ENCODE measurements at regions of chr22 and their contacts with region 1.

Region 1: DNA sequence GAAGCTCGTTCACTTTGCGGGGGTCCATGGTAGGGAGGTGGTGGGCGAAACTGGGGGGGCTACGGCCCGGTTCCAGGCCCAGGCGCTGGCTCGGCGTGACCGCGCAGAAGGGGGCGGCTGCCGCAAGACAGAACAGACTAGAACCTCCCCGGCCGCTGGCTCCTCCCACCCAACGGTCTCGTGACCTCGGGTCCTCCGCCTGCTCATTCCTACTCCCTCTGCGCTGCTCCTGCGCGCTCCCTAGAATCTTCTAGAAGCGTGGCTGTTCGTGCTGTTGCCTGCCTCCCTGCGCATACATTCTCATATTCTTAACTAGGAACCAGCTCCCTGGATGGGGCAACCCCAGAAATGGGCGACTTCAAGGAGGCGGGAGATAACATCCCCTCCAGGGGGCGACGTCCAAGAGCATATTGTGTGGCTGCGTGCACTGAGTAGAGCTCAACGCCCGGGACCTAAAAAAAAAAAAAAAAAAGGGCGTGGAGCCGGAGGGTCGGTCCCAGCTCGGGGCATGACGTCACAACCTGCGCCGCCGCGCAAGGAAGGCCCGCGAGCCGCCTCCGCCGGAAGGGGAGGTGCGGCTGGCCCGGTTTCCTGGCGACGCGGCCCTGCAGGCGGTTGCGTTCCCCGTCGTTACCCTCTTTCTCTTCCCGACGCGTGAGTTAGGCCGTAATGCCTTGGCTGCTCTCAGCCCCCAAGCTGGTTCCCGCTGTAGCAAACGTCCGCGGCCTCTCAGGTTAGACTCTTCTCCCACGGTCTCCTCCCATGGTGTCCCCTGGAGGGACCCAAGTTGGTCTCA is at the starts of genes ST13 and XPNPEP3:
- DNase-seq: peak; percentile 88 to 98
- H3K4me3 ChIP-seq: peak within 1 kb of the TSS; percentile 98 to 99 (median 98)
- H3K27ac ChIP-seq: peak within 1 kb of the TSS; percentile 98
- H3K4me1 ChIP-seq: peaks cover 0 to 6% (median 0%) of the 10 kb centered on the region in 4 experiments; a peak in 2 of 7 replicates
- H3K27me3 ChIP-seq: no peaks in the 10 kb centered on the region
- CTCF ChIP-seq: no peak
- EP300 ChIP-seq: peak; percentile 22 to 47; a peak in 2 of 3 replicates
- POLR2A ChIP-seq: peak; percentile 81 to 91
- RAD21 ChIP-seq: no peak
- total RNA-seq, gene ST13: 305 TPM in 2 replicates
- total RNA-seq, gene XPNPEP3: 21.5 and 25.8 TPM in 2 replicates

Region 2: DNA sequence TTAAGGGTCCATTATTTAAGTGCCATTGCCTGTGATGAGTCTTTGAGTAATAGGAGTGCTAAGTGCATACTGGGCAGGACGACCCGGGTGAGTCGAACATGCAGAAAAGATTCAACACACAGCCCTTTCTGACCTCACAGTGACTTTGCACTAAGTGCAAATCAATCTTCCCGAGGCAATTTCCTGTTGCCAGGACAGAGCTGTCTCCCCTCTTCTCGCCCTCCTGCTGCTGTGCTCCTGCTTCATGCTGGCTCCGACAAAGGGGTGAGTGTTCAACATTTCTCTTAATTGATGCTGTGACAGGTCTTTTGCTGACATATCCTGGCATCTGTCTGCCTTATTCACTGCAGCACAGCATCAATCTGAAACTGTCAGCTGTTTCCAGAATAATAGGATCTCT is 135.4 kb before region 1 on chr22:
- CTCF ChIA-PET with region 1: no interaction called
- POLR2A ChIA-PET with region 1: no interaction called
- DNase-seq: no peak
- H3K4me3 ChIP-seq: no peak overlapping the region
- H3K27ac ChIP-seq: no peak overlapping the region
- H3K4me1 ChIP-seq: peaks cover 0 to 10% (median 7%) of the 10 kb centered on the region in 4 experiments; a peak in 5 of 7 replicates
- H3K27me3 ChIP-seq: no peaks in the 10 kb centered on the region
- CTCF ChIP-seq: no peak
- EP300 ChIP-seq: no peak
- POLR2A ChIP-seq: no peak
- RAD21 ChIP-seq: no peak

Region 3: GRCh38 chr22:40766956-40767355 is 89.8 kb before region 1 on chr22:
- CTCF ChIA-PET with region 1: no interaction called
- POLR2A ChIA-PET with region 1: no interaction called
- DNase-seq: no peak
- H3K4me3 ChIP-seq: no peak overlapping the region
- H3K27ac ChIP-seq: no peak overlapping the region
- H3K4me1 ChIP-seq: no peaks in the 10 kb centered on the region
- H3K27me3 ChIP-seq: no peaks in the 10 kb centered on the region
- CTCF ChIP-seq: no peak
- EP300 ChIP-seq: no peak
- POLR2A ChIP-seq: no peak
- RAD21 ChIP-seq: no peak

Region 4: DNA sequence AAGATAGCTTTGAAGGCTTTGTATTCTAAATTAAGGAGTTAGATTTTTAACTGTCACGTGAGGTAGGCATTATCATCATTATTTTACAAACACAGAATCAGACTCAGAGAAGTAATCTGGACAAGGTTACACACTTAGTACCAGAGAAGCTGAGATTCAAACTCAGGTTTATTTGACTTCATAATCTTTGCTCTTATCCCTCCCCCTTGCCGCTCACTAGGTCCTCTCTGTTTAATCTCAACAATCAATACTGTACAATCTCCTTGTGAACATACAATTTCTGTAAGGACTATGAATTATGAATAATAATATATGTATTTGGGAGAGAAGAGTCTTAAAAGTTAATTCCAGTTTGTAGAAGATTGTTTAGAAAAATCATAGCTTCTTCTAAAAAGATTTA is 10.4 kb after region 1 on chr22:
- CTCF ChIA-PET with region 1: interaction called, 11 read pairs
- POLR2A ChIA-PET with region 1: interaction called, 24 read pairs
- DNase-seq: no peak
- H3K4me3 ChIP-seq: no peak overlapping the region
- H3K27ac ChIP-seq: no peak overlapping the region
- H3K4me1 ChIP-seq: no peaks in the 10 kb centered on the region
- H3K27me3 ChIP-seq: no peaks in the 10 kb centered on the region
- CTCF ChIP-seq: no peak
- EP300 ChIP-seq: no peak
- POLR2A ChIP-seq: no peak
- RAD21 ChIP-seq: no peak

Measured in H1 (cell line).